Adrenal gland (tissue), 19 donors: ENCODE measurements at regions of chr1 and their contacts with region 1.

Region 1: DNA sequence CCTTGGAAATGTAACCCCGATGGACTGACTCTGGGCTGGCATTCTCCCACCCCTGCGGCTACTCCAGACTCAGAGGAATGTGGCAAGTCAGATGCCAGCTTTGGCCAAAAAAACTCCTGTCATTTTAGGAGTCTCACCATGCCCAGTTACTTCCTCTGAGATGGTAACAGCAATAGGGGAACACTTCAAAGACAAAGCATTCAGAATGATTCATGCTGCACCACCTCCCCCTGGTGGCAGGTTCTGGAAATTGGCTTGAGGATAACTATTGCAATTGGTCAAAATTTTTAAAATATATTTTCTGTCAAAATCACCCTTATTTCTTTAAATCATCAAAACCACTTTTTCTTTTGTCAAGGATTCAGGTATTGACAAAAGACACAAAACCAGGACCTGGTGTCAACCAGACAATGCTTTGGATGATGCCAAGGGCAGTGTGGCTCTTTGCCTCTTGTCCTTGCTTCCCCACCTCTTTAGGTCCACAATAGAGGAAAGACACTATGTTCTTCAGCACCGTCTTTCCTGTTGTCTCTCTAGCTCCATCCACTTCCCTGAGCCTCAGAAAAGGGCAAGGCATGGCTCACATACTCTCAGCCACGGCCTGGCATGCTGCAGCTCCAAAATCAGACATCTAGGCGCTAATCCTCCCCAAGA is 9.9 kb upstream of the CDCA8 start:
- DNase-seq: peak; percentile 66 to 92 (median 75)
- H3K4me3 ChIP-seq: no peak overlapping the region
- H3K27ac ChIP-seq: no peak overlapping the region
- H3K4me1 ChIP-seq: no peaks in the 10 kb centered on the region
- H3K27me3 ChIP-seq: no peaks in the 10 kb centered on the region
- CTCF ChIP-seq: peak; percentile 82 to 92 (median 84)
- POLR2A ChIP-seq: no peak

Region 2: DNA sequence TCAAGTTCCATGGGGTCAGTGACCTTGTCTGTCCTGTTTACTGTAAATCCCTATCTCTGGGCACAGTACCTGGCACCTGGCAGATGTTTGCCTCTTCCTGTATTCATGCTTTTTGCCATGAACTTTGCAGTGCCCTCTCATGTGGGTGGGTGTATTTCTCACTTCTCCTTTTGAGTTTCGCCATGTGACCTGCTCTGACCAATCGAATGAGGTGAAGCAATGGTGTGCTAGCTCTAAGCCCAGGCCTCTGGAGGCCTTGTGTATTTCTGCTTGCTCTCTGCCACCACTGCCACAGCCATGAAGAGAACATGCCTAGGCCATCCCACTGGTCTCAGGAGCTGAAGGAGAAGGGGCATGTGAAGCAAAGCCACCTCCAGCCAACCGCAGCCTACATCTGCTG is 393.6 kb before region 1 on chr1:
- intact Hi-C with region 1: no loop called
- DNase-seq: no peak
- H3K4me3 ChIP-seq: no peak overlapping the region
- H3K27ac ChIP-seq: no peak overlapping the region
- H3K4me1 ChIP-seq: no peaks in the 10 kb centered on the region
- H3K27me3 ChIP-seq: no peaks in the 10 kb centered on the region
- CTCF ChIP-seq: no peak
- POLR2A ChIP-seq: no peak

Region 3: GRCh38 chr1:37449936-37450335 is 232.5 kb before region 1 on chr1:
- intact Hi-C with region 1: loop called (anchors 5 to 10 kb)
- DNase-seq: no peak
- H3K4me3 ChIP-seq: no peak overlapping the region
- H3K27ac ChIP-seq: no peak overlapping the region
- H3K4me1 ChIP-seq: peaks cover 0 to 4% of the 10 kb centered on the region in 2 donors
- H3K27me3 ChIP-seq: no peaks in the 10 kb centered on the region
- CTCF ChIP-seq: no peak
- POLR2A ChIP-seq: no peak

Region 4: GRCh38 chr1:37595440-37596319 is 86.8 kb before region 1 on chr1 and contains the start of gene GNL2:
- intact Hi-C with region 1: loop called in 1 of 2 experiments (anchors 5 kb)
- DNase-seq: peak; percentile 96 to 99 (median 97)
- H3K4me3 ChIP-seq: peak within 1 kb of the TSS; percentile 47 to 87 (median 74)
- H3K27ac ChIP-seq: peak within 1 kb of the TSS in 4 of 5 donors; percentile 68 to 92 (median 76)
- H3K4me1 ChIP-seq: peaks cover 6 to 24% of the 10 kb centered on the region in 2 donors
- H3K27me3 ChIP-seq: no peaks in the 10 kb centered on the region
- CTCF ChIP-seq: peak in 1 of 6 experiments; percentile 5
- POLR2A ChIP-seq: peak; percentile 45 to 77
- total RNA-seq, gene GNL2: 13.6 to 84.7 (median 26.4) TPM

Region 5: GRCh38 chr1:37606481-37607263 is 75.8 kb before region 1 on chr1:
- intact Hi-C with region 1: loop called in 1 of 2 experiments (anchors 5 kb)
- DNase-seq: no peak
- H3K4me3 ChIP-seq: no peak overlapping the region
- H3K27ac ChIP-seq: no peak overlapping the region
- H3K4me1 ChIP-seq: peaks cover 0 to 3% of the 10 kb centered on the region in 2 donors
- H3K27me3 ChIP-seq: no peaks in the 10 kb centered on the region
- CTCF ChIP-seq: no peak
- POLR2A ChIP-seq: no peak

Region 6: GRCh38 chr1:37859507-37860345 is 177.3 kb after region 1 on chr1 and contains the start of gene MTF1:
- intact Hi-C with region 1: loop called in 1 of 2 experiments (anchors 10 kb)
- DNase-seq: peak; percentile 96 to 99 (median 98)
- H3K4me3 ChIP-seq: peak within 1 kb of the TSS; percentile 55 to 98 (median 82)
- H3K27ac ChIP-seq: peak within 1 kb of the TSS; percentile 73 to 87 (median 83)
- H3K4me1 ChIP-seq: peaks cover 9 to 32% of the 10 kb centered on the region in 2 donors
- H3K27me3 ChIP-seq: no peaks in the 10 kb centered on the region
- CTCF ChIP-seq: peak; percentile 89 to 94 (median 92)
- POLR2A ChIP-seq: peak; percentile 38 to 63
- total RNA-seq, gene MTF1: 2.3 to 28.0 (median 5.9) TPM